CD4-positive, alpha-beta memory T cell (primary cell): ENCODE measurements at regions of chr2 and their contacts with region 1.

Region 1: GRCh38 chr2:218229239-218229638 is 12.2 kb downstream of the ARPC2 start:
- DNase-seq: peak; percentile 46 to 75 (median 52)
- H3K4me3 ChIP-seq: no peak overlapping the region
- H3K4me3 Mint-ChIP-seq: peak overlapping the region; percentile 42 to 88 (median 70)
- H3K27ac ChIP-seq: peak overlapping the region; percentile 35
- H3K27ac Mint-ChIP-seq: peak overlapping the region; percentile 70 to 95 (median 90)
- H3K4me1 ChIP-seq: peaks cover 80% of the 10 kb centered on the region
- H3K4me1 Mint-ChIP-seq: peaks cover 50 to 86% (median 70%) of the 10 kb centered on the region in 4 donors
- H3K27me3 ChIP-seq: no peaks in the 10 kb centered on the region
- H3K27me3 Mint-ChIP-seq: no peaks in the 10 kb centered on the region

Region 2: DNA sequence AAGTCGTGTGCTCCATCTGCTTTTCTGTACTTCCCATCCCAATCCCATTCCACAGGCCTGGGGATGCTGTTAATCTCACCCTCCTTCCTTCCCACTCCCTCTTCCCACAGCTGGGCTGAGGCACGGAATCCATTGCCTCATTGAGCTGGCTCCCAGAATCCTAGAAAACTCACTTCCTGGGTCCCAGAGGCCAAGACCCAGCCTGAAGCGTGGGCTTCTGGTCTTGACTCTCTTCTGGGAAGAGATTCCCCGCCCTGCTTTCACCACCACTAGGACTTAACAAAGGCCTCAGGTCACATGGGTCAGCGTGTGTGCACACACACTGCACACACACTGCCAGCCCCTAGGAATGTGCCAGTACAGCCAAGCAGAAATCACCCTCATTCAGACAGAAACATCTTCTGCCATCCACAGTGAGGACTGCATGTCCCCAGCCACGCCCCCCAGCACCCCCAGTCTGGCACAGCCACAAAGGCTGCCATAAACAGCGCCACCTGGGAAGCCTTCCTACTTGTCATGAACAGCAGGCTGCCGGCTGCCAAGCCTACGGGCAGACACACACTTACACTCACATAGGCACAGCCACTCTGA is 392.2 kb before region 1 on chr2:
- CTCF ChIA-PET with region 1: no interaction called
- POLR2A ChIA-PET with region 1: no interaction called
- intact Hi-C with region 1: no loop called
- DNase-seq: no peak
- H3K4me3 ChIP-seq: no peak overlapping the region
- H3K4me3 Mint-ChIP-seq: no peak overlapping the region
- H3K27ac ChIP-seq: no peak overlapping the region
- H3K27ac Mint-ChIP-seq: no peak overlapping the region
- H3K4me1 ChIP-seq: no peaks in the 10 kb centered on the region
- H3K4me1 Mint-ChIP-seq: no peaks in the 10 kb centered on the region
- H3K27me3 ChIP-seq: no peaks in the 10 kb centered on the region
- H3K27me3 Mint-ChIP-seq: peaks cover 0 to 12% of the 10 kb centered on the region in 2 donors

Region 3: GRCh38 chr2:218186355-218186766 is 42.9 kb before region 1 on chr2:
- CTCF ChIA-PET with region 1: interaction called, 12 read pairs
- POLR2A ChIA-PET with region 1: interaction called, 3 read pairs
- intact Hi-C with region 1: loop called (anchors 1 kb)
- DNase-seq: peak; percentile 68 to 79 (median 73)
- H3K4me3 ChIP-seq: no peak overlapping the region
- H3K4me3 Mint-ChIP-seq: peak overlapping the region in 1 of 8 donors; percentile 3
- H3K27ac ChIP-seq: no peak overlapping the region
- H3K27ac Mint-ChIP-seq: peak overlapping the region in 2 of 7 donors; percentile 24 to 44
- H3K4me1 ChIP-seq: peaks cover 8% of the 10 kb centered on the region
- H3K4me1 Mint-ChIP-seq: peaks cover 5 to 8% (median 7%) of the 10 kb centered on the region in 4 donors
- H3K27me3 ChIP-seq: no peaks in the 10 kb centered on the region
- H3K27me3 Mint-ChIP-seq: peaks cover 0 to 1% of the 10 kb centered on the region in 2 donors

Region 4: GRCh38 chr2:218216674-218217359 is 12.4 kb before region 1 on chr2 and contains the start of gene ARPC2:
- CTCF ChIA-PET with region 1: interaction called, 67 read pairs
- POLR2A ChIA-PET with region 1: interaction called, 144 read pairs
- intact Hi-C with region 1: loop called (anchors 1 kb)
- DNase-seq: peak; percentile 92 to 97 (median 96)
- H3K4me3 ChIP-seq: peak within 1 kb of the TSS; percentile 85 to 97
- H3K4me3 Mint-ChIP-seq: peak within 1 kb of the TSS; percentile 89 to 98 (median 96)
- H3K27ac ChIP-seq: peak within 1 kb of the TSS; percentile 93
- H3K27ac Mint-ChIP-seq: peak within 1 kb of the TSS; percentile 93 to 99 (median 97)
- H3K4me1 ChIP-seq: peaks cover 39% of the 10 kb centered on the region
- H3K4me1 Mint-ChIP-seq: peaks cover 28 to 52% (median 38%) of the 10 kb centered on the region in 4 donors
- H3K27me3 ChIP-seq: no peaks in the 10 kb centered on the region
- H3K27me3 Mint-ChIP-seq: no peaks in the 10 kb centered on the region
- total RNA-seq, gene ARPC2: 412 to 414 TPM

Region 5: DNA sequence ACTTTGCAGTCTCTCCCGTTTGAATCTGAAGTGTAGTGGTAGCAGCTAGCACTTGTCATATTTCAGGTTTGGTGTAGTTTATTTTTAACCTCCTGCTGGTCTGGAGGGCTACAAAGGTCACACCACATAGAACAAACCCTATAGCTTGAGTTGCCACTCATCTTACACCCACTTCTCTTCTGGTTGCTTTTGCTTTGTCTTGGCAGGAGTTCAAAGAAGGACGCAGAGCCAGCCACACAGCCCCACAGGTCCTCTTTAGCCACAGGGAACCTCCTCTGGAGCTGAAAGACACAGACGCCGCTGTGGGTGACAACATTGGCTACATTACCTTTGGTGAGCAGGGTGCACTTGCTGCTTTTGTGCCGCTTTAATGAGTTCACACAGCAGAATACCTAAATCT is 16.0 kb after region 1 on chr2:
- CTCF ChIA-PET with region 1: interaction called, 8 read pairs
- POLR2A ChIA-PET with region 1: interaction called, 3 read pairs
- intact Hi-C with region 1: loop called (anchors 2 kb)
- DNase-seq: no peak
- H3K4me3 ChIP-seq: no peak overlapping the region
- H3K4me3 Mint-ChIP-seq: no peak overlapping the region
- H3K27ac ChIP-seq: no peak overlapping the region
- H3K27ac Mint-ChIP-seq: peak overlapping the region in 3 of 7 donors; percentile 57 to 78 (median 69)
- H3K4me1 ChIP-seq: peaks cover 9% of the 10 kb centered on the region
- H3K4me1 Mint-ChIP-seq: peaks cover 11 to 24% (median 13%) of the 10 kb centered on the region in 4 donors
- H3K27me3 ChIP-seq: no peaks in the 10 kb centered on the region
- H3K27me3 Mint-ChIP-seq: no peaks in the 10 kb centered on the region

Region 6: DNA sequence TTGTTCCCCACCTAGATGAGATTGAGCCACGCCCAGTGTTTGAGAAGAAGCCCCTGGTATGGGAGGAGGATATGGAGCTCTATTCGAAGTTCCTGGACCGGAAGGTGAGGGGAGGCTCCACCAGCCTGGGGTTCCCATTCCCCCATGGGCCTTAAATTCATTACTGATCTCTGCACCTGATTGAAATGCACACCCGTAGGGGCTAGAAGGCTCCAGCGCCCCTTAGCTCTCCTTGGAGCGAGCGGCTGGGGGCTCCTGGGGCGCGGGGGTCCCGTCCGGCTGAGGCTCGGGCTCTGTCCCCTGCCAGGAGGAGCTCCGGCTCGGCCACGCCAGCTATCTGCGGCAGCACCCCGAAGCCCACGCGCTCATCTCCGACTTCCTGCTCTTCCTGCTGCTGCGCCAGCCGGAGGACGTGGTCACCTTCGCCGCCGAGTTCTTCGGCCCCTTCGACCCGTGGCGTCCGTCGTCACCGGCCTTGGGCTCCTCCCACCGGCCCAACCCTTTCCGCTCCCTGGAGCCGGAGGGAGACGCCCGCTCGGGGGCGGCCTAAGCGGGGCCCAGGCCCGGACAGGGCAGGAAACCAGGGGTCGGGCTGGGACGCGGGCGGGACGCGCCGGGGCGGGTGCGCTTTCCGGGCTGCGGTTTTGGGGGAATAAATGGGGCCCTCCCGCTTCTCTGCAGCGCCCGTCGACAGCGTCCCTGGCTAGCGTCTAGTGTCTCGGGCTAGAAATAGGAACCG is 138.3 kb after region 1 on chr2:
- CTCF ChIA-PET with region 1: no interaction called
- POLR2A ChIA-PET with region 1: no interaction called
- intact Hi-C with region 1: no loop called
- DNase-seq: peak; percentile 64 to 74 (median 71)
- H3K4me3 ChIP-seq: peak overlapping the region; percentile 42 to 60
- H3K4me3 Mint-ChIP-seq: peak overlapping the region; percentile 74 to 89 (median 82)
- H3K27ac ChIP-seq: peak overlapping the region; percentile 42
- H3K27ac Mint-ChIP-seq: peak overlapping the region; percentile 84 to 96 (median 90)
- H3K4me1 ChIP-seq: peaks cover 28% of the 10 kb centered on the region
- H3K4me1 Mint-ChIP-seq: peaks cover 13 to 33% (median 25%) of the 10 kb centered on the region in 4 donors
- H3K27me3 ChIP-seq: no peaks in the 10 kb centered on the region
- H3K27me3 Mint-ChIP-seq: no peaks in the 10 kb centered on the region

Region 7: GRCh38 chr2:218523651-218524050 is 294.4 kb after region 1 on chr2:
- CTCF ChIA-PET with region 1: no interaction called
- POLR2A ChIA-PET with region 1: no interaction called
- intact Hi-C with region 1: no loop called
- DNase-seq: no peak
- H3K4me3 ChIP-seq: no peak overlapping the region
- H3K4me3 Mint-ChIP-seq: no peak overlapping the region
- H3K27ac ChIP-seq: no peak overlapping the region
- H3K27ac Mint-ChIP-seq: no peak overlapping the region
- H3K4me1 ChIP-seq: no peaks in the 10 kb centered on the region
- H3K4me1 Mint-ChIP-seq: peaks cover 0 to 4% (median 2%) of the 10 kb centered on the region in 4 donors
- H3K27me3 ChIP-seq: no peaks in the 10 kb centered on the region
- H3K27me3 Mint-ChIP-seq: no peaks in the 10 kb centered on the region